Activated T-helper 2 cell treated with anti-CD3 and anti-CD28 coated beads, Interferon-gamma antibody, Interleukin-2, Interleukin-4, amounts not matched to agents 10 μg/mL and 5 μg/mL and 100 μg/mL, durations not matched to agents 14 hours and 24 hours and 36 hours (primary cell): ENCODE measurements at regions of chr3 and their contacts with region 1.

Region 1: GRCh38 chr3:194315088-194315964 is 35.8 kb downstream of the CPN2 start:
- DNase-seq: peak; percentile 80
- H3K4me3 Mint-ChIP-seq: peak overlapping the region; percentile 74
- H3K27ac Mint-ChIP-seq: no peak overlapping the region
- H3K4me1 Mint-ChIP-seq: peaks cover 30% of the 10 kb centered on the region
- H3K27me3 Mint-ChIP-seq: peaks cover 40% of the 10 kb centered on the region

Region 2: GRCh38 chr3:193665370-193665989 is 649.8 kb before region 1 on chr3:
- intact Hi-C with region 1: loop called (anchors 5 kb)
- DNase-seq: no peak
- H3K4me3 Mint-ChIP-seq: no peak overlapping the region
- H3K27ac Mint-ChIP-seq: no peak overlapping the region
- H3K4me1 Mint-ChIP-seq: no peaks in the 10 kb centered on the region
- H3K27me3 Mint-ChIP-seq: no peaks in the 10 kb centered on the region

Region 3: GRCh38 chr3:193788189-193788991 is 526.9 kb before region 1 on chr3:
- intact Hi-C with region 1: loop called (anchors 2 kb)
- DNase-seq: no peak
- H3K4me3 Mint-ChIP-seq: no peak overlapping the region
- H3K27ac Mint-ChIP-seq: no peak overlapping the region
- H3K4me1 Mint-ChIP-seq: no peaks in the 10 kb centered on the region
- H3K27me3 Mint-ChIP-seq: peaks cover 48% of the 10 kb centered on the region

Region 4: DNA sequence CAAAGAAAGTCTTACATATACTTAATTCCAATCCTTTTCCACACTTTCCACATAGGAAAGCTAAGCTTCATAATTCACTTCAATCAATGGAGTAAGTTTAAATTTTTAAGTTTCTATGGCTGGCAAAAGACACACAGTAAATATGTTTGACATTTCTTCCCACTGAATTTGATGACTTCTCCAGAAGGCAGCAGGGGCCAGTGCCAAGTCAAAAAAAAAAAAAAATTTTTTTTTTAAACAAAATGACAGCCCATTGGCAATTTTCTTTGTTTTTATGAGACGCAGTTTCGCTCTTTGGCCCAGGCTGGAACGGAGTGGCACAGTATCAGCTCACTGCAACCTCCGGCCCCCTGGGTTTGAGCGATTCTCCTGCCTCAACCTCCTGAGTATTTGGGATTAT is 142.8 kb after region 1 on chr3:
- intact Hi-C with region 1: no loop called
- DNase-seq: no peak
- H3K4me3 Mint-ChIP-seq: no peak overlapping the region
- H3K27ac Mint-ChIP-seq: no peak overlapping the region
- H3K4me1 Mint-ChIP-seq: no peaks in the 10 kb centered on the region
- H3K27me3 Mint-ChIP-seq: no peaks in the 10 kb centered on the region